Naive thymus-derived CD4-positive, alpha-beta T cell (primary cell): ENCODE measurements at regions of chr9 and their contacts with region 1.

Region 1: DNA sequence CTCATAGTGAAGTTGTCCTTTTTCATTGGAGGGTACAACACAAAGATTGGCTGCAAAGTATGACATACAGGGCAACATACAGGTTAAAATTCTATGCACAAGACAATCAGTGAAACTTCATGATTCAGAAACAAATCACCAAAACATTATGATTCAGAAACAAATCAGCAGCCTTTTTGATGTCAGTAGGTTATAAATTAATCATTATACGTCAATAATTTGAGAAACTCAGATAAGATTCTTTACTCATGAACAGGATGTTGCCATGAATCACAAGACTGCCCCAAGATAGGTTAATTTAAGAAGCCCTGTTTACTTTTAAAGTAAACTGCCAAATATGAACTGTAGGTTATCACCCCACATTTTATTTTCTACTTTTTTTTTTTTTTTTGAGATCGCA is 62.2 kb upstream of the IL33 start:
- DNase-seq: no peak
- ATAC-seq: no peak
- H3K4me3 ChIP-seq: no peak overlapping the region
- H3K4me3 Mint-ChIP-seq: no peak overlapping the region
- H3K27ac ChIP-seq: no peak overlapping the region
- H3K27ac Mint-ChIP-seq: no peak overlapping the region
- H3K4me1 ChIP-seq: no peaks in the 10 kb centered on the region
- H3K4me1 Mint-ChIP-seq: no peaks in the 10 kb centered on the region
- H3K27me3 ChIP-seq: no peaks in the 10 kb centered on the region
- H3K27me3 Mint-ChIP-seq: peaks cover 4 to 42% (median 24%) of the 10 kb centered on the region in 5 donors

Region 2: DNA sequence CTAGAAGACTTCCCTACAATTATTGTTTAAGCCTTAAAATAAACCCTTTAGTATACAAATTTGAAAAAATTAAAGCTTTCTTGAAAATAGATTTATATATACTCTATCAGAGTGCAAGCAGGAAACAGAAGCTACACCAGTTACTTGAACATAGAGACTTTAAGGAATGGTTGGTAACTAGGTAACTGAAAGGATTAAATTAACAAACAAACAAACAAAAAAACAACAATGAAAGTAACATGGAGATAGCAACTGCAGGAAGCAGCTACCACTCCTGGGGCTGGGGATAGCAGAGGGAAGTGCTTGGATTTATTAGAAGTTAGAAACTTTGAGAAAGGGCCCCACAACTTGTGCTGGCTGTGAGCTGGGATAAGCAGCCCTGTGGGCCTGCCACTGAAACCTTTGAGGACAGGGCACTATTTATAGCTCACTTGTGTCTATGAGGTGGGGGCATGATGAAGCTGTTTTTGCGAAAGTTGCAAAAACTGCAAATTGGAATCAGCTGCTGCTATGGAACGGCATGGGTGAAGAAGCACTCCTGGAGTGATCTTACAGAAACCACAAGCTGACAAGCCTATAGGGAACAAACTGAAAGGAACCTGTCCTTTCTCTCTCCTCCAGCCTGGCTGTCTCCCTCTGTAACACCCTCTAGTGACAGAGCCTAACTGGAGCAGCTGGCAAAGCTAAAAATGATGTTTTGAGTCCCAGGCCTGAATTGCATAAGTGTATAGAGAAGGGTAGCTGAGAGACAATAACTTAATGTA is 46.7 kb before region 1 on chr9:
- CTCF ChIA-PET with region 1: no interaction called
- POLR2A ChIA-PET with region 1: no interaction called
- intact Hi-C with region 1: loop called in 1 of 2 experiments (anchors 10 kb)
- DNase-seq: no peak
- ATAC-seq: peak; percentile 53
- H3K4me3 ChIP-seq: no peak overlapping the region
- H3K4me3 Mint-ChIP-seq: no peak overlapping the region
- H3K27ac ChIP-seq: no peak overlapping the region
- H3K27ac Mint-ChIP-seq: peak overlapping the region in 7 of 9 donors; percentile 5 to 39 (median 17)
- H3K4me1 ChIP-seq: peaks cover 0 to 5% of the 10 kb centered on the region in 2 donors
- H3K4me1 Mint-ChIP-seq: peaks cover 0 to 46% (median 30%) of the 10 kb centered on the region in 7 donors
- H3K27me3 ChIP-seq: no peaks in the 10 kb centered on the region
- H3K27me3 Mint-ChIP-seq: peaks cover 0 to 2% (median 0%) of the 10 kb centered on the region in 5 donors